ENCODE measurements at regions of chr11 and their contacts with region 1.

Region 1: DNA sequence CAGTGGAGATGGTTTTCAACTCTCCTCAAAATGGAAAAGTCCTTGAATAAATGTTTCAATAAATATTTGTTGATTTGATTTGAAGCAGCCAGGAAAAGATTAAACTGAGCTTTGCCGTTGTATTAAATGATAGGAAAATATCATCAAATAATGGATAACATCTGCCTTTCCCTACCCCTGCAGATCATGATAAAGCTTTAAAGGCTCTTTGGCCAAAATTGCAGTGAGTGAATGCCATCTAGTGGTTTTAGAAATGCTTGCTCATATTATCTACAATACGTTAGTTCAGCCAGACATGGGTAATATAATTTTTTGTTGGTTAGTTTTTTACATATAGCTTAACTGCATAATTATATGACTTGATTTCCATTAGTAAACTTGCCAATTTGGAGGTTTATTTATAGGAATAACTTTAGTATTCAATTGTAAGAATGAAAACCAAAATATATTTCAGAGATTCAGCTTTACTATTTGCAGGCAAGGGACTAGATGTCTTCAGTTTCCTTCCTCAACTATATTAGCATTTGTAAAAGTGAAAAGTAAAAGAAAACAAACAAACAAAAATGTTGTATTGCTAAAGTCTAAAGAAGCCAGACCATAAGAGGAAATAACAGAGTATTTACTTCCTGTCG is 159.2 kb downstream of the MSANTD4 start:
- DNase-seq: no peak
- H3K4me3 ChIP-seq: no peak overlapping the region
- H3K27ac ChIP-seq: no peak overlapping the region
- H3K4me1 ChIP-seq: no peaks in the 10 kb centered on the region
- H3K27me3 ChIP-seq: no peaks in the 10 kb centered on the region
- CTCF ChIP-seq: peak; percentile 88

Region 2: DNA sequence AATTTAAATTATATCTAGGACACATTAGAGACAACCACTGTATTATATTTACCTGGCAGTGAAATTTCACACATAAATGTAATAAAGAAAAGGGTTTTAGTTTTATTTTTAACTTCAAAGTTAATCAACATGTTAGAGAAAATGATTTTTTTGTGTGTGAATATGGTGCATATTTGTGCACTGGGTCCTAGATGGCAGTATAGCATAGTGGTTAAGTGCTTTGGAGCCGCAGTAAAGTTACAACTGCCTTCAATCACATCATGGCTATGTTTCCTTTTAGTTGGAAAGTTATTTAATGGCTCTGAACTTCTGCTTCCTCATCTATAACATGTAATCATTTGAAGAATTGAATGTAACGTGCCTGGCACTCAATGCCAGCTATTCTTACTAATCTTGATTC is 1935.3 kb before region 1 on chr11:
- CTCF ChIA-PET with region 1: interaction called, 3 read pairs
- POLR2A ChIA-PET with region 1: no interaction called
- intact Hi-C with region 1: loop called (anchors 5 kb)
- DNase-seq: peak in 1 of 2 experiments; percentile 23
- H3K4me3 ChIP-seq: no peak overlapping the region
- H3K27ac ChIP-seq: no peak overlapping the region
- H3K4me1 ChIP-seq: peaks cover 21% of the 10 kb centered on the region
- H3K27me3 ChIP-seq: no peaks in the 10 kb centered on the region
- CTCF ChIP-seq: peak; percentile 65

Region 3: GRCh38 chr11:104164028-104164520 is 1698.8 kb before region 1 on chr11 and contains the start of gene PDGFD:
- CTCF ChIA-PET with region 1: no interaction called
- POLR2A ChIA-PET with region 1: no interaction called
- intact Hi-C with region 1: loop called (anchors 10 kb)
- DNase-seq: peak; percentile 70 to 76
- H3K4me3 ChIP-seq: peak within 1 kb of the TSS; percentile 69
- H3K27ac ChIP-seq: peak within 1 kb of the TSS; percentile 28
- H3K4me1 ChIP-seq: peaks cover 15% of the 10 kb centered on the region
- H3K27me3 ChIP-seq: no peaks in the 10 kb centered on the region
- CTCF ChIP-seq: peak; percentile 61
- total RNA-seq, gene PDGFD: 6.1 and 6.9 TPM in 2 replicates

Region 4: DNA sequence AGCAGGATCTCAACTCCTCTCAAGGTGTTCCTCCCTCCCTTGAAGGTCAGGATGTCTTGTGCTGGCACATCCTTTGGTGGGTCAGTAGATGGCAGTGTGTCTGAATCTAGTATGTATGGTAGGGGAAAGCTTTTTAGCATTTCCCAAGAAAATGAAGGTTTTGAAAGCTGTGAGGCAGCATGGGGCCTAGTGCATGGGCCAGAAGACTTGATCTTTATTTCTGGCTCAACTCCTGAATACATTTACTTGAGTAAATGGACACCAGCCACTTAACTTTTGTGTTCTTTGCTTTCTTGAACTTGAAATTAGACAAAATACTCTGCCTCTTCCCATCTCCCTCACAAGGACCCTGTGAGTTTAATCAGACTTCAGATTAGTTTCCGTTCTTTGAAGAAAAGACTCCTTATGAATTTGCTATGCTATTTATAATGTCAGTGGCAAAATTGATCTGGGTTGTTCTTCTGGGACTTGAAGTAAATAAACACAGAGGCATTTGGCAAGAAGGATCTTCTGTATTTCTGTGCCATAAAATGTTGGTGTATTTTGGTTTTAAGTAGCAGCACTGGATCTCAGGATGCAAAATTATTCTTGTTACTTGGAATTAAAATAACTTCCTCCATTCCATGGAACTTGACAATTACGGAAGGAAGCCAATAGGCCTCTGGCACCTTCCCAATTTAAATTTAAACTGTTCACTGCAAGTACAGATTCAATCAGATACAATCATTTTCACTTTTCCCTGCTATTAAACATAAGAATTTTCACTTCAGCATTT is 1253.4 kb before region 1 on chr11:
- CTCF ChIA-PET with region 1: no interaction called
- POLR2A ChIA-PET with region 1: no interaction called
- intact Hi-C with region 1: loop called (anchors 1 kb)
- DNase-seq: peak in 1 of 2 experiments; percentile 1
- H3K4me3 ChIP-seq: no peak overlapping the region
- H3K27ac ChIP-seq: no peak overlapping the region
- H3K4me1 ChIP-seq: no peaks in the 10 kb centered on the region
- H3K27me3 ChIP-seq: no peaks in the 10 kb centered on the region
- CTCF ChIP-seq: peak; percentile 72

Region 5: GRCh38 chr11:104956528-104956927 is 906.3 kb before region 1 on chr11:
- CTCF ChIA-PET with region 1: no interaction called
- POLR2A ChIA-PET with region 1: no interaction called
- intact Hi-C with region 1: loop called (anchors 10 kb)
- DNase-seq: peak in 1 of 2 experiments; percentile 66
- H3K4me3 ChIP-seq: no peak overlapping the region
- H3K27ac ChIP-seq: no peak overlapping the region
- H3K4me1 ChIP-seq: peaks cover 10% of the 10 kb centered on the region
- H3K27me3 ChIP-seq: no peaks in the 10 kb centered on the region
- CTCF ChIP-seq: no peak

Region 6: DNA sequence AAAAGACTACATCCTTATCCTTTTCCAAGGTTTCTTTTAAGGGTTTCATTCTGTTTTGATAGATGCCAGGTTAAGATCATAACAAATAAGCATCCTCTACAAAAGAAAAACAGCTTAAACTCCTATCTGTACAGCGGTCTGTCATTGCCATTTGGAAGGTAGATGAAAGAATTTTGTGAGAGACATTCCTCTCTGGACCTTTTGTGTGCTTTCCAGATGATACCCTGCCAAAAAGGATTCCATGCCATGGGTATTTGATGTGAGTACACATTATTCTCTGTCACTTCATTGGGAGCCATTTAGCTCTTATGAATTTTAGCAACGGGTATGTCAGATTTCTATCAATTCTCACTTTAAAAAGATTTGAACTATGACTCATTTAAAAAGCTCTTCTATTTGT is 99.3 kb before region 1 on chr11:
- CTCF ChIA-PET with region 1: no interaction called
- POLR2A ChIA-PET with region 1: no interaction called
- intact Hi-C with region 1: no loop called
- DNase-seq: no peak
- H3K4me3 ChIP-seq: no peak overlapping the region
- H3K27ac ChIP-seq: no peak overlapping the region
- H3K4me1 ChIP-seq: no peaks in the 10 kb centered on the region
- H3K27me3 ChIP-seq: no peaks in the 10 kb centered on the region
- CTCF ChIP-seq: no peak